Left colon (tissue), 2 donors: ENCODE measurements at regions of chr20 and their contacts with region 1.

Region 1: DNA sequence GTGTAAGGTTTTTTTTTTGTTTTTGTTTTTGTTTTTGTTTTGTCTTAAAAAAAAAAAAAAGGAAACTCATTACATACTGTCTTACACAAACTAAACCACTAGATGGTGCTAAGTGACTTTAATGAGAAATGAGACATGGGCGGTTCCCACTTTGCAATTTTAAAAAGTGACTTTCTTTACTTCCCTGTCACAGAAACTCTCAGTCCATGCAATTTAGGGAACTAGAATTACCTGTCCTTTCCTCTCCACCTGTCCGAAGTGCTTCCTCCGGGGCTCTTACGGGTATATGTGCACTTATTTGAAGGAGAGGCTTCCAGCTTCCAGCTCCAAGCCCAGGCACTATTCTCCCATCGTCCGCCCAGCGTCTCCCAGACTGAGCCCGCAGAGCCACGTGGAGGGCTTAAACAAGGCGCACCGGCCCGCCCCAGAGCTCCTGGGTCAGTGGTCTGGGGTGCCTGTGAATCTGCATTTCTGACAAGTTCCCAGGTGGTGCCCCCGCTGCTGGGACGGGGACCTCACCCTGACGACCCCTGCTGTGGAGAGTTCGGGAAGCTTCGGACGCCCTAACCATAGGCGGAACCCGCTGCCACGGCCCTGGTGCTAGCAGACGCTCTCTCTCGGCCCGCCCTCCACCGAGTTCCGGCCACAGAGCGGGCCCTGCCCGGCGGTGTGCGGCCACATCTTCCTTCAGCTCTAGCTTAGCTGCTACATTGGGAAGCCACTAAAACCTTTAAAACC is 26.1 kb downstream of the BFSP1 start:
- DNase-seq: peak; percentile 53 to 79
- ATAC-seq: peak; percentile 81

Region 2: DNA sequence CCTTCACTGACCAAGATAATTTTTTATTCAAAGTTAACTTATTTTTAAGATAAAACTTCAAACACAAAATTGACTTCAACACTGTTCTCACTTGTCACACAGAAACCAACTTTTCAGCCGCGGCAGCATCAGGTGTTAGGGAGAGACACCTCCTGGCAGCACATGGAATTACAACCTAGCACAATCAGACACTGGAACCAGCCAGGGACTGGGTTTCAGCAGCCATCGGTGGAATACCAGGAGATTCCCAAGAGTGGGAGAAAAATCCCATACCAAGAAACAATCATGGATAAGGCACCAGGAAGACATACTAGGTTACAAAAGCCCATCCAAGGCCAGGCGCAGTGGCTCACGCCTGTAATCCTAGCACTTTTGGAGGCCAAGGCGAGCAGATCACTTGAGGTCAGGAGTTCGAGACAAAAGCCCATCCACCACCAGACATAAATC is 393.5 kb after region 1 on chr20:
- intact Hi-C with region 1: loop called (anchors 10 kb)
- DNase-seq: peak; percentile 71 to 83
- ATAC-seq: peak; percentile 80

Region 3: GRCh38 chr20:17995967-17996819 is 491.1 kb after region 1 on chr20:
- intact Hi-C with region 1: loop called in 1 of 2 experiments (anchors 10 kb)
- DNase-seq: peak in 1 of 2 donors; percentile 29
- ATAC-seq: peak; percentile 63

Region 4: DNA sequence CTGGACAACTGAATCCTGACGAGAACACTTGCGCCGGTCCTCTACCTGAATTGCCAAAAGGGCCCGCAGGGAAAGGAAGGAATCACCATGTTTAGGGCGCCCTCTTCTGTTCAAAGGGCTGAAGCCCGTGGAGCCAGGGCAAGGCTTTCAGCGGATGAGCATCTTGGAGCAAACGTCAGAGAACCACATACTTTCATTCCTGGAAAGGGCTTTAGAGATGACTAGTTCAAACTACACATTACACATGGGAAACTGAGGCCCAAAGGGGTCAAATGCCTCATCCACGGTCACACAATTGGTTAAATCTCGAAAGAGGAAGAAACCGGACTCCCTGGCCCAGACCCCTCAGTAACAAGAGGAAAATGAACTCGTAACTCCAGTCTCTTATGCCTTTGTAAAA is 771.8 kb after region 1 on chr20:
- intact Hi-C with region 1: loop called in 1 of 2 experiments (anchors 5 kb)
- DNase-seq: peak; percentile 48 to 75
- ATAC-seq: peak; percentile 97